ENCODE measurements at regions of chr3 and their contacts with region 1.

Region 1: GRCh38 chr3:66138336-66139313 is 82.2 kb upstream of the SLC25A26 start:
- DNase-seq: peak; percentile 55
- H3K4me3 ChIP-seq: no peak overlapping the region
- H3K27ac ChIP-seq: no peak overlapping the region
- H3K4me1 ChIP-seq: no peaks in the 10 kb centered on the region
- H3K27me3 ChIP-seq: no peaks in the 10 kb centered on the region
- CTCF ChIP-seq: peak; percentile 65 to 77 (median 74)
- EP300 ChIP-seq: no peak
- POLR2A ChIP-seq: no peak

Region 2: GRCh38 chr3:65245133-65246063 is 893.2 kb before region 1 on chr3:
- in situ Hi-C with region 1: no loop called
- intact Hi-C with region 1: no loop called
- DNase-seq: no peak
- H3K4me3 ChIP-seq: no peak overlapping the region
- H3K27ac ChIP-seq: no peak overlapping the region
- H3K4me1 ChIP-seq: peaks cover 0 to 4% (median 0%) of the 10 kb centered on the region in 4 donors
- H3K27me3 ChIP-seq: no peaks in the 10 kb centered on the region
- CTCF ChIP-seq: peak; percentile 26 to 47 (median 35)
- EP300 ChIP-seq: no peak
- POLR2A ChIP-seq: no peak

Region 3: DNA sequence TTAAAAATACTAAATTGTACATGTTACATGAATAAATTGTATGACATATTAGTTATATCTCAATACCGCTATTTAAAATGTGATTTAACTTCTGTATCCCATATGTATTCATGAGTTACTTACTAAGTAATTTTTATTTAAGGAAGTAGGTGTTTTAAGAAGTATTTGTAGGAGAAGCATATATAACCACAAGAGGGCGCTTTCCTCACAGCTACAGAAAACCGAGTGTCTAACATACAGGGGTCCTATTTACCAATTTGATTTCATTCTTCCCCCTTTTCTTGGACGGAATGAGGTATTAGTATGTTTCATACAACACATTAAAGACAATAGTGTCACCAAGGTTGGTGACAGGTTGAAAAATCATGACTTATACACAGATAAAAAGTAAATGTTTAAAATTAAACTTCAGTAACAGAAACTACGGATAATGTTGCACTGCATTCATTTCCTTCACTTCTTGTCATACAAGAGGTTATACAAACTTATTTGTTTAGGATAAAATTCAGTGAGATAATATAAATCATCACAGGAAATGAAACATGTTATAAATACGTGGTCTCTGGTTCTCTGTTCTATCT is 353.5 kb before region 1 on chr3:
- in situ Hi-C with region 1: loop called (anchors 5 to 25 kb)
- intact Hi-C with region 1: no loop called
- DNase-seq: no peak
- H3K4me3 ChIP-seq: no peak overlapping the region
- H3K27ac ChIP-seq: no peak overlapping the region
- H3K4me1 ChIP-seq: peaks cover 0 to 10% (median 4%) of the 10 kb centered on the region in 4 donors
- H3K27me3 ChIP-seq: no peaks in the 10 kb centered on the region
- CTCF ChIP-seq: peak; percentile 60 to 76 (median 72)
- EP300 ChIP-seq: no peak
- POLR2A ChIP-seq: no peak

Region 4: GRCh38 chr3:66038726-66039589 is 99.7 kb before region 1 on chr3 and contains the start of gene MAGI1:
- in situ Hi-C with region 1: no loop called
- intact Hi-C with region 1: loop called (anchors 10 kb)
- DNase-seq: peak; percentile 91
- H3K4me3 ChIP-seq: peak within 1 kb of the TSS; percentile 67 to 76 (median 73)
- H3K27ac ChIP-seq: peak within 1 kb of the TSS; percentile 94 to 97 (median 95)
- H3K4me1 ChIP-seq: peaks cover 0 to 21% (median 13%) of the 10 kb centered on the region in 4 donors
- H3K27me3 ChIP-seq: no peaks in the 10 kb centered on the region
- CTCF ChIP-seq: no peak
- EP300 ChIP-seq: no peak
- POLR2A ChIP-seq: peak; percentile 67
- total RNA-seq, gene MAGI1: 50.8 to 190 (median 67.4) TPM

Region 5: DNA sequence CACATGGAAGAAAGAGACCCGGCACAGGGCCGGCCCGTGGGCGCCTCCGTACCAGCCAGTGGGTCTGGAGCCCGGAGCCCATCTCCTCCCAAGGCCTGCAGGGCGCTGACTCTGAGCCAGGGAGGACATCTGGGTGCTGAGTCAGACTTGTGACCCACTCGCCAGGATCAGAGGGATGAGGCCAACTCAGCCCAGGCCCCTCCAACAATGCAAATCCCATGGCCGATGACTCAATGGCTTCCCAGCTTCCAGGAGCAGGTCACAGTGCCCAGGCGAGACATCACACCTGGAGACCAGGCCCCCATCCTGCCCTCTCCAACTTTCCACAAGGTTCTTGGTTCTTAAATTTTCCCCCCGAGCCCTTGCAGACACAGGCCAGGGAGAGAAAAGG is 267.1 kb after region 1 on chr3:
- in situ Hi-C with region 1: no loop called
- intact Hi-C with region 1: no loop called
- DNase-seq: peak; percentile 29
- H3K4me3 ChIP-seq: no peak overlapping the region
- H3K27ac ChIP-seq: peak overlapping the region; percentile 46 to 87 (median 70)
- H3K4me1 ChIP-seq: peaks cover 13 to 61% (median 39%) of the 10 kb centered on the region in 4 donors
- H3K27me3 ChIP-seq: no peaks in the 10 kb centered on the region
- CTCF ChIP-seq: no peak
- EP300 ChIP-seq: no peak
- POLR2A ChIP-seq: no peak

Measured in transverse colon (tissue), 4 donors.